ENCODE measurements at regions of chr11 and their contacts with region 1.

Region 1: GRCh38 chr11:65440831-65441499 is 18.4 kb downstream of the NEAT1 start:
- DNase-seq: peak in 2 of 3 donors; percentile 72 to 78
- H3K4me3 ChIP-seq: peak overlapping the region in 1 of 3 experiments; percentile 42
- H3K4me3 Mint-ChIP-seq: peak overlapping the region; percentile 76 to 80
- H3K27ac ChIP-seq: peak overlapping the region; percentile 36 to 52
- H3K27ac Mint-ChIP-seq: peak overlapping the region; percentile 87 to 95 (median 92)
- H3K4me1 ChIP-seq: peaks cover 58 to 74% of the 10 kb centered on the region in 2 donors
- H3K4me1 Mint-ChIP-seq: peaks cover 76% of the 10 kb centered on the region
- H3K27me3 ChIP-seq: no peaks in the 10 kb centered on the region
- H3K27me3 Mint-ChIP-seq: peaks cover 0 to 7% (median 0%) of the 10 kb centered on the region in 3 donors
- CTCF ChIP-seq: no peak

Region 2: DNA sequence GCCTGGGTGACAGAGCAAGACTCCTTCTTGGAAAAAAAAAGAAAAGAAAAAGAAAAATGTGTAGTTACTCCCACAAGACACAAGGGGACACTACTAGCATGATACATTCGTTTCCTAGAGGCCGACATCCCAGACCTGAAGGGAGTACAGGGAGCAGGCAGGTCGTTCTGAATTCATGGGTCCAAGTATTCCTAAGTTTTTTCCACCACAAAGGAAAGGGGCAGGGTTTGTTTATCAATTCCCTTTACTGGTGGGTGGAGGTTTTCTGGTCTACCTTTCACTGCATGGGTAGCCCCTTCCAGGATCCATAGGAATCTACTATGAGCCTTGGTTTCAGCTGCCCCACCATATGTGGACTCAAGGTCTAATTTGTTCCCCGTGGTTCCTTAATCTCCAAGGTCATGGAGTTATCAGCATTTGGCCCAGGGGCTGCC is 74.6 kb before region 1 on chr11:
- intact Hi-C with region 1: loop called in 1 of 2 experiments (anchors 10 kb)
- DNase-seq: peak; percentile 51 to 72 (median 71)
- H3K4me3 ChIP-seq: no peak overlapping the region
- H3K4me3 Mint-ChIP-seq: no peak overlapping the region
- H3K27ac ChIP-seq: no peak overlapping the region
- H3K27ac Mint-ChIP-seq: no peak overlapping the region
- H3K4me1 ChIP-seq: peaks cover 30 to 37% of the 10 kb centered on the region in 2 donors
- H3K4me1 Mint-ChIP-seq: peaks cover 33% of the 10 kb centered on the region
- H3K27me3 ChIP-seq: no peaks in the 10 kb centered on the region
- H3K27me3 Mint-ChIP-seq: peaks cover 1 to 4% (median 1%) of the 10 kb centered on the region in 3 donors
- CTCF ChIP-seq: peak; percentile 82

Region 3: GRCh38 chr11:65454696-65455456 is 13.9 kb after region 1 on chr11:
- intact Hi-C with region 1: no loop called
- DNase-seq: peak; percentile 83 to 86 (median 85)
- H3K4me3 ChIP-seq: peak overlapping the region; percentile 37 to 76 (median 48)
- H3K4me3 Mint-ChIP-seq: peak overlapping the region; percentile 92 to 93
- H3K27ac ChIP-seq: peak overlapping the region; percentile 54 to 77
- H3K27ac Mint-ChIP-seq: peak overlapping the region; percentile 89 to 98 (median 95)
- H3K4me1 ChIP-seq: peaks cover 33 to 35% of the 10 kb centered on the region in 2 donors
- H3K4me1 Mint-ChIP-seq: peaks cover 47% of the 10 kb centered on the region
- H3K27me3 ChIP-seq: no peaks in the 10 kb centered on the region
- H3K27me3 Mint-ChIP-seq: peaks cover 0 to 11% (median 2%) of the 10 kb centered on the region in 3 donors
- CTCF ChIP-seq: no peak

Region 4: GRCh38 chr11:65516135-65516935 is 75.4 kb after region 1 on chr11:
- intact Hi-C with region 1: loop called in 1 of 2 experiments (anchors 5 kb)
- DNase-seq: no peak
- H3K4me3 ChIP-seq: no peak overlapping the region
- H3K4me3 Mint-ChIP-seq: no peak overlapping the region
- H3K27ac ChIP-seq: no peak overlapping the region
- H3K27ac Mint-ChIP-seq: peak overlapping the region in 2 of 7 donors; percentile 5 to 25
- H3K4me1 ChIP-seq: no peaks in the 10 kb centered on the region
- H3K4me1 Mint-ChIP-seq: peaks cover 4% of the 10 kb centered on the region
- H3K27me3 ChIP-seq: no peaks in the 10 kb centered on the region
- H3K27me3 Mint-ChIP-seq: peaks cover 2 to 11% (median 7%) of the 10 kb centered on the region in 3 donors
- CTCF ChIP-seq: no peak